ENCODE measurements at regions of chr22 and their contacts with region 1.

Region 1: DNA sequence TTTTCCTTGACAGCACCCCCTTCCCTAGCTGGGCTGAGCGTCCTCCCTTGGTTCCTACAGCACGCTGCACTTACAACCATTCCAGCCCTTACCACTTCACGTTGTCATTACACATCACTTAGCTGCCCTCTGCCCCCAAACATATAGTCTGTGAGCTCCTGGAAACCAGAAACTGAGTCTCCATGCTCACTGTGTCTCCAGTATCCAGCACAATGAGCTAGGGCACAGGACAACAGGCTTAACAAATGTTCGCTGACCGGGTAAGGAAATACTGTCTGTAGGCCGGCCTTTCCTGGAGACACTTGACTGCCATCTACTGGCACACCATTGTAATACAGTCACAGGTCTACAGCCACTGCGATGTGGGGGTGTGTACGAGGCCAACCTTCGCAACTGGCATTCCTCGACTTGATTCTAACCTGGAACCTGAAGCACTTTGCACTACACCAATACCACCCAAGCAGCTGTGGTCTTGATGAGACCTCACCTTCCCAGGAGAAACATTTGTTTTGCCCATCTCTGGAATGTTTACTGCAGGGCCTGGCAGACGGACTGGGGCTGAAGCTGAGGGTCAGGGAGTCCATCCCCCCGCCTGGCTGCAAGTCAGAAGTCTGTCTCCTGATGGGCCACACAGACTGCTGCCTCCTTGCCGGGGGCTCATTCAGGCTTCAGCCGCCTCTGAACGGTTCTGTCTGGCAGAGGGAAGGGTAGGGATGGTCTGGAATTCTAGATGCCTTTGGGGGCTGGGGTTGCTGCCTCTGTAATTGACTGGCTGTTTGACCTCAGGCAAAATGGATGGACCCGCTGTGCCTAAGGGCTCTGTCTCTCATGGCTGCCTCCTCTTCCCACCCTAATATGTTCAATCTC is 72.0 kb downstream of the SYN3 start:
- DNase-seq: peak; percentile 81

Region 2: DNA sequence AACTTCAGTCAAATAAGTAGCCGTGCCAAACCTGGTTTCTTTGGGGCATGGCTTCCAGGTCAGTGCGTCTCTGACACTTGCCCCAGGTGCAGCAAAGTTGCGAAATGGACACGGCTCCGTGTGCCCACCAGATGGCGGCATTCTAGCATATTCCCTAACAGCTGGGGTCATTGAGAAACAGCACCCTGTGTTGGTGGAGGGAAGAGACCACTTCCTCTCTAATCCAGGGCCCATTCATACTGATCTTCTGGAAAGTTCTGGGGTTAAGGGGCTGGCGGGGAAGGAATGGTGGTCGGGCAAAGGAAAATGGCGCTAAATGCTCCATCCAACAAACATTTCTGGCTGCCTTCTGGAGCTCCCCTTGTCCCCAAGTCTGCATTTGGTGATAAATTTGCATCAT is 325.8 kb before region 1 on chr22:
- intact Hi-C with region 1: loop called (anchors 5 kb)
- DNase-seq: no peak

Region 3: GRCh38 chr22:32828150-32828549 is 158.0 kb before region 1 on chr22:
- intact Hi-C with region 1: loop called (anchors 5 kb)
- DNase-seq: no peak

Region 4: GRCh38 chr22:32926600-32926999 is 59.5 kb before region 1 on chr22:
- intact Hi-C with region 1: loop called (anchors 5 kb)
- DNase-seq: no peak